Astrocyte of the cerebellum (primary cell): ENCODE measurements at regions of chr2 and their contacts with region 1.

Region 1: GRCh38 chr2:236343400-236344161 is 79.4 kb upstream of the ASB18 start:
- DNase-seq: peak; percentile 75
- H3K4me3 ChIP-seq: no peak overlapping the region
- CTCF ChIP-seq: peak; percentile 84

Region 2: DNA sequence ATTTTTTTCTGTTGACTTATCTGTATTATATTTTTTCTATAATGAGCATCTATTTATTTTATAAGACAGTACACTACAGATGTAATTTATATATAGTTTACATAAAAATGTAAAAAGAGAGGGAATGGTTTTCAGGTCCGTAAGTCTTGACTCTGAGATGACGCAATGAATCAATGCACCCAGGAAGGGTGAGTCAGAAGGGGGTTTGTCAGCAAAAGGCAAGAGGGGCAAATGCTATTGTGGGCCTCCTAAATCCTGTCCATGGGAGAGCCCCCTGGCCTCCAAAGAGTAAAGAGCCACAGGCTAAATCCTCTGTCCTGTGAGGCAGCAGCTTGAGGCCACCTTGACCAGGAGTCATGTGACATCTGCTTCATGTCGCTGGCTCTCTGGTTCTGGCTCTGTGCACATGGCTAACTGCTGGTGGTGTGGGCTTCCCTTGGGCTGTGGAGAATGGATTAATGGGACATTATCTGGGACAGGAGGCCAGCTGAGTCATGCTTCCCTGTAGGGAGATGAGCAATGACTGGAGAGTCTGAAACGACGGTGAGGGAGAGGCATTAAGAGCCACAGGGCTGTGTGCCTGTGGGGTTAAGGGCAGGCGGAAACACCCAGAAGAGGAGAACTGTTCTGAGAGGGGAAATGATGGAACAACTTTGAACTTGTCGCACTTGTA is 56.6 kb before region 1 on chr2:
- in situ Hi-C with region 1: no loop called
- DNase-seq: no peak
- H3K4me3 ChIP-seq: no peak overlapping the region
- CTCF ChIP-seq: no peak

Region 3: DNA sequence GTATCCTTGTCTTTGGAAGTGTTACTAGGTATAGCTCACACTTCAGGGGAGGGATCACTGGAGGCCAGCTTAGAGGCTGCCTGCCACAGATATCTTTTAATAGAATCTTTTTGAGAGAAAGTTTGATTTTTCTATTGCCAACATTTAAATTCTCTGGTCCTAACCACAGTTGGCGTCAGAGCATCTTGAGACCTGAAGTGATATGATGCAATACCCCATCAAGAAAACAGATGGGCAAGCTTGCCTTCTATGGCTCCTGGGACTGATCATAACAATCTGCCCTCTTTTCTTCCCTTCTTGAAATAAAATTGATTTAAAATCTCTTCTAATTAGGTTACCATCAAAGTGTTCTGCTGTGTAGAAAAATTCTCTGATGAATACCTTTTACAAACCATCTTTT is 120.6 kb after region 1 on chr2:
- in situ Hi-C with region 1: no loop called
- DNase-seq: no peak
- H3K4me3 ChIP-seq: no peak overlapping the region
- CTCF ChIP-seq: no peak

Region 4: GRCh38 chr2:236569573-236569973 is 226.0 kb after region 1 on chr2 and contains the start of gene ACKR3:
- in situ Hi-C with region 1: loop called (anchors 5 kb)
- DNase-seq: peak; percentile 74
- H3K4me3 ChIP-seq: peak within 1 kb of the TSS; percentile 48
- CTCF ChIP-seq: peak; percentile 69

Region 5: DNA sequence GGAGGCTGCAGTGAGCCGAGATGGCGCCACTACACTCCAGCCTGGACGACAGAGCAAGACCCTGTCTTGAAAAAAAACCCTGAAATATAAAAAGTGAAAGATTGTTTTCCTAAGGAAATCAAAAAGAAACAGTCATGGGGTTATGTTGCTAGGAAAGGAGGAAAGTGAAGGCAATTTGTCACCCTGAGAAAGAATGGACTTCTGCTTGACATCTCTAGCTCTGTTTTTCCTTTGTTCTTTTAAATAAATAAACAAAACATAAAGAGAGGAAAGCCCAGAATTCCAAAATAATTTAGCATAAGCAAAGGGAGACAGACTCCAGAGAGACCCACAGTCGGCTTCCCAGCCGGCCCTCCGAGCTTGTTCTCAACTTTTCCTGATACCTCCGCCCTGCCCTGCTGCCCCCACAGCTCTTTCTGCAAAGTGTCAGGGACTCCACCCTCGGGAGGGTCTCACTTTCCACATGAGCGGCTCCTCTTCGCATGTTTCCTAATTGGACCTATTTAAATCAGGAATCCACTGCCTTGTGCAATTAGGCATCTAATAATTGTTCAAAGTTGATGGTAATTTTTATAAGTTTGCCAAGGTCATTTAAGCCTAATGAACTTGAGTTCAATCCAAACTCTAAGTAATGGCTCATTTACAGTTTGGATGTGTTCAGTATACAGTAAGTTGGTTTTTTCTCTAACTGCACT is 692.3 kb after region 1 on chr2:
- in situ Hi-C with region 1: loop called (anchors 10 kb)
- DNase-seq: no peak
- H3K4me3 ChIP-seq: no peak overlapping the region
- CTCF ChIP-seq: no peak

Region 6: DNA sequence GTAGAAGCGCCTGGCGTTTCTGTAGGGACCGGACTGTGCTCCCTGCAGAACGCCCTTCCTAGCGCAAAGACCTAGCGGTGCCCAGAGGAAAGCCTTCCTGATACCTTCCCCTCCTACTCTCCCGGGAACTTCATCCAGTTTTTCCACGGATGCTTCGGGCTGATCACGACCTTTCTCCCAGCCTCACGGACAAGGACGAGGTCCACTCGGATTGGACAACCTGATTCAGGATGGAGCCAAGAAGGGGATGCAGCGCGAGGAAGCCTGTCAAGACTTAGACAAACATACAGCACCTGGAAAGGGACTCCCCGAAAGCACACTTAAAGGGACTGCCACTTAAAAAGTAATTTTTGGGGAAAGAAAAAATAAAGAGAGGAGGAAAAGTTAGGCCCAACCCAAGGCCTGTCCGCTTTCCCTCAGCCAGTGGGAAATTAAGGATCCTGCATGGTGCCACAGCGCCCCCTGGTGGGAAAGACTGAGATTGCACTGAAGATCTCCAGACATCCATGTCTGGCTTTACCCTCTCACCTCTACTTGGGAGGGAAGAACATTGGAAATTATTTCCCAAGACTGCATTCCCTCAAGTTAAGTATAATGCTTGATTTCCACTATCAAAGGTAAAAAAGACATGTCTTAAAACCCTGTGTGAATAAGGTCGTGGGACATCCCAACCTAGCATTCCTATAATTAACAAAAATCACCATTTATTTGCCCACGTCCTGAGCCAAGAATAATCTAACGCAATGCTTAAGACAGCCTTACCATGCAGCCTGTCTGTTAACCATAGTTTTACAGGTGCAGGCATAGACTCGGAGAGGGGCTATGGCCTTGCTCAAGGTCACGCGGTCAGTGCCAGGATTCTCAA is 728.7 kb after region 1 on chr2:
- in situ Hi-C with region 1: loop called (anchors 5 kb)
- DNase-seq: no peak
- H3K4me3 ChIP-seq: no peak overlapping the region
- CTCF ChIP-seq: peak; percentile 96